ENCODE measurements at regions of chr3 and their contacts with region 1.

Region 1: DNA sequence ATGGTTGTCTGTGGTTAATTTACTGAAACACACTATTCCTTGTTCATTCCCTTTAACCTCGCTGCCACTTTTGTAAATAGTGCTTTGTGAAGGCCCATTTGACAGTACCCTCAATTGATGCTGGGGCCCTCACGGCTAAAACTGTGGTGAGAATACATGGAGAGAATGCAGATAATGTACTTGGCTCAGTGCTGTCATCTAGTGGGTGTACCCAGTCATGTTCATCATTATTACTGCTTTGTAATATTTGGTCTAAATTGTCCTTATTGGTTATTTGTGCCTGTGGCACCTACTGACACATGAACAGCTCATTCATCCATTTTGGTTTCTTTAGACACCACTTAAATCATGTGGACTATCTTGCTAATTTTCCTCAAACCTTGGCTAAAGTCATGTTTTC is 543.6 kb downstream of the EDEM1 start:
- DNase-seq: no peak
- H3K4me3 ChIP-seq: no peak overlapping the region
- H3K27ac ChIP-seq: no peak overlapping the region
- H3K4me1 ChIP-seq: no peaks in the 10 kb centered on the region
- H3K27me3 ChIP-seq: no peaks in the 10 kb centered on the region
- CTCF ChIP-seq: no peak

Region 2: GRCh38 chr3:5635741-5636140 is 95.4 kb before region 1 on chr3:
- CTCF ChIA-PET with region 1: no interaction called
- dilution Hi-C with region 1: loop called (anchors 5 kb)
- in situ Hi-C with region 1: no loop called
- intact Hi-C with region 1: no loop called
- DNase-seq: no peak
- H3K4me3 ChIP-seq: no peak overlapping the region
- H3K27ac ChIP-seq: no peak overlapping the region
- H3K4me1 ChIP-seq: no peaks in the 10 kb centered on the region
- H3K27me3 ChIP-seq: no peaks in the 10 kb centered on the region
- CTCF ChIP-seq: no peak